Tibial artery (tissue), 4 donors: ENCODE measurements at regions of chr1 and their contacts with region 1.

Region 1: GRCh38 chr1:156129706-156130581 is 15.4 kb downstream of the LMNA start:
- DNase-seq: peak; percentile 87 to 93
- H3K4me3 ChIP-seq: peak overlapping the region; percentile 25 to 33
- H3K27ac ChIP-seq: peak overlapping the region; percentile 92 to 99
- H3K4me1 ChIP-seq: peaks cover 17 to 74% (median 60%) of the 10 kb centered on the region in 4 donors
- H3K27me3 ChIP-seq: no peaks in the 10 kb centered on the region
- CTCF ChIP-seq: peak; percentile 97 to 99

Region 2: DNA sequence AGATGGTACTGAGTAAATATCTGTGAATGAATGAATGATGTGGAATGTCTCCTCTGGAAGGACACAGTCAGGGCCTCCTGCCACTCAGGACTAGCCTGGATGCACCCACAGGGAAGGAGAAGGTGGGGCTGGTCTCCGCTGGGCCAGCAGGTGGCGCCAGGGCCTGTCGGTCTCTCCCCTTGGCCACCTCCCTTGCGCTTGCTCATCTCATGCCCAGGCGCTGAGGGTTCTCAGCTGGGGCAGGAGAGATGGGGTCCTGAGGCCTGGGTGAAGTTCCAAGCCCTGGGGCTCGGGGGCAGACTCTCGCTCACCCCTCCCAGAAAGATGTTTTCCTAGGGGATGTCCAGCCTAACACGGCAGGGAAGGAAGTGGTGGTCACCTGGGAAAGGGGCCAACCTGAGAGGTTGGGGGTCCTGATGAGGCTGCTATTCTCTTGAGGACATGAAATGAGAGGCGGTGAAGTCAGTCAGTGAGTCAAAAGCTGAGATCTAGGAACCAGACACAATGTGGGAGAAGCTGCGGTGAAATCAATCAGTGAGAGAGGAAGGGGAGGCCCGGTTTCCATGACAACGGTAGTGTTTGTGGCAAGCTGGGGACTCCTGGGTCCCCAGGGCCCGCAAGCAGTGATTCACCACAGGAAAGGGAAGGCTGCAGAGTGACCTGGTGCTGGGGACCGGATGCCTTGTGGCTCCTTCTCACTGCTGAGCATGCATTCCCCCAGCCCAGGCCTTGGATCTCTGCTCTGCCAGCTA is 33.1 kb before region 1 on chr1:
- intact Hi-C with region 1: loop called (anchors 2 kb)
- DNase-seq: peak; percentile 91 to 96
- H3K4me3 ChIP-seq: no peak overlapping the region
- H3K27ac ChIP-seq: peak overlapping the region; percentile 81 to 86
- H3K4me1 ChIP-seq: peaks cover 5 to 34% (median 21%) of the 10 kb centered on the region in 4 donors
- H3K27me3 ChIP-seq: no peaks in the 10 kb centered on the region
- CTCF ChIP-seq: peak; percentile 94 to 99